Breast epithelium (tissue), 4 donors: ENCODE measurements at regions of chr10 and their contacts with region 1.

Region 1: DNA sequence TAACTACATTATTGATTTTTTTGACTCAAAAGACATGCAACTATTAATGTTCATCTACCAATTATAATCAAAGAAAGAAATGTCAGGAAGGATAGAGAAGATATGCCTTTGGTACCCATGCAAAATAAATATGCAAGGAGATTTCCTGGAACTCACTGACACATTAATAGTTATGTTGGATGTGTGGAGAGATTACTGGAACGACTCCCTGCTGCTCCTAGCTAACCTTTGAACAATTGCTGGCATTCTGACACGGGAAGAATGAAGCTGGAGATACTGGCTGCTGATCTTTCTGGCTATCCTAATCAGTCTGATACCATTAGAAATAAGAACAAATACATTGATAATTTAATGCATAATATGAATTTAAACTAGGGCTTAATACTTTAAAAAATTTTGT is 507.9 kb upstream of the NRG3 start:
- DNase-seq: no peak
- H3K4me3 ChIP-seq: no peak overlapping the region
- H3K27ac ChIP-seq: no peak overlapping the region
- H3K4me1 ChIP-seq: no peaks in the 10 kb centered on the region
- H3K27me3 ChIP-seq: no peaks in the 10 kb centered on the region
- CTCF ChIP-seq: no peak
- POLR2A ChIP-seq: no peak

Region 2: GRCh38 chr10:80957161-80957560 is 410.0 kb before region 1 on chr10:
- intact Hi-C with region 1: no loop called
- DNase-seq: no peak
- H3K4me3 ChIP-seq: no peak overlapping the region
- H3K27ac ChIP-seq: no peak overlapping the region
- H3K4me1 ChIP-seq: no peaks in the 10 kb centered on the region
- H3K27me3 ChIP-seq: no peaks in the 10 kb centered on the region
- CTCF ChIP-seq: no peak
- POLR2A ChIP-seq: no peak

Region 3: DNA sequence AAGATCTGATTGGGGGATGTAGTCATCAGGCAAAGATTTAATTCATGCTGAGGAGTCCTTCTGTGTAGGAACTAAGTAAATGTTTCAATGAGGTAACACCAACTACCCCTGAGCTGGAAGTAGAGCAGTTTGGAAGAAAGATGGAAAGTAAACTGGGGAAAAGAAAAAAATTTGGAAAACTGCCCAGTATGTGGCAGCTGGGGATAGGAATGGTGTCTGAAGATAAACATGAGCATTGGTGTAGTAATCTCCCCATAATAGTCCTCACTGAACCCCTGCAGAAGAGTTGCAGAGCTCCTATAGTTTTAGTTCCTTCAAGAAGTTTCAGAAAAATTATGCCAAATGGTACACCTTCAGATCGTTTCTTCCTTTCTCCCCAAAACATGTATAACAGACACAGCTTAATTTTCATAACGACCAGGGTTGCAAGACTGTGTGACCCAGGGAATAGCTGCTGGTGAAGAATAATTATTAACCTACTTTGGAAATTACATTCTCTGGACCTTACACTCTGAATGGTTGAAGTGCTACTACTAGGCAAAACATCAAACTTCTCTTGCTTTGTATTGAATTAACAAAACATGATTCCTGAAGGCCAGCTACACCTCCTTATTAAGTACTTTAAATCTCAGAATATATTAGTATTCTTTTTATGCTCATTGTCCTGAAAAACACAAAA is 61.5 kb after region 1 on chr10:
- intact Hi-C with region 1: no loop called
- DNase-seq: no peak
- H3K4me3 ChIP-seq: no peak overlapping the region
- H3K27ac ChIP-seq: no peak overlapping the region
- H3K4me1 ChIP-seq: no peaks in the 10 kb centered on the region
- H3K27me3 ChIP-seq: no peaks in the 10 kb centered on the region
- CTCF ChIP-seq: no peak
- POLR2A ChIP-seq: no peak

Region 4: DNA sequence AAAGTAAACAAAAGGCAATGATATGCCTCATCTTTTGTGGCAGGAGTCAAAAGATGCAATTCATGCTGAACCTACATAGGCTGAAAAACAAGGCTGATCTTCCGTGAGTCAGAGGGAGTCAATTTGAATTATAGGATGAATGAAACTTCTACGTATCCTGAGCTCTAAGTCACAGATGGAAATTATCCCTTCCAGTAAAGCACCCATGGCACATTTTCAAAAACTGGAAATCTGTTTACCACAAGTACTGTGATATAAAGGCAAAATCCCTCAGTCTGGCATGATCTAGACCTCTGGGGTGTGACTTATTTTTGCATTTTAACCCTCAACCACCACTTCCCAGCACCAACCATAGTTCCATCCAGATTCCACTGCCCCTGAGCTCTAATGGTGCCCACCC is 577.5 kb after region 1 on chr10:
- intact Hi-C with region 1: loop called (anchors 5 kb)
- DNase-seq: no peak
- H3K4me3 ChIP-seq: no peak overlapping the region
- H3K27ac ChIP-seq: no peak overlapping the region
- H3K4me1 ChIP-seq: no peaks in the 10 kb centered on the region
- H3K27me3 ChIP-seq: no peaks in the 10 kb centered on the region
- CTCF ChIP-seq: no peak
- POLR2A ChIP-seq: no peak